ENCODE measurements at regions of chr10 and their contacts with region 1.

Region 1: DNA sequence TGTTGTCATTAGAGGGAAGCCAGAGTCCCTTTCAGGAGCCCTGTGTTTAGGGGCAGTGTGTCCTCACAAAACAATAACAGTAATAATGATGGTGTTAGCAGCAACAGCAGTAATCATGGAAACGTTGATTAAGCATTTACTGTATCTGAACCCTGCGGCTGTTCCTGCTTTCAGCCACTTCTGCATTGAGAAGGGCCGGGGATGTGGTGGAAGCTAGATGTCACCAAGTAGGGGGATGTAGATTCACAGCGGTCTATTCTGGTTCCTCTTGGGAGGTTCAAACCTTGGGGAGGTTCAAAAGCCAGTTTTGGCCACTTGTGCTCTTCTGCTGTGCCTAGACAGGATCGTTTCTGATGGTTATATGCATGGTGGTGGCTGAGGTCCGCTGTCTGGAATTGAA is 44.8 kb downstream of the PRPF18 start:
- DNase-seq: no peak
- H3K4me3 ChIP-seq: no peak overlapping the region
- H3K4me3 Mint-ChIP-seq: no peak overlapping the region
- H3K27ac Mint-ChIP-seq: no peak overlapping the region
- H3K4me1 ChIP-seq: peaks cover 38% of the 10 kb centered on the region
- H3K4me1 Mint-ChIP-seq: peaks cover 15% of the 10 kb centered on the region
- H3K27me3 ChIP-seq: no peaks in the 10 kb centered on the region
- H3K27me3 Mint-ChIP-seq: no peaks in the 10 kb centered on the region
- CTCF ChIP-seq: no peak

Region 2: GRCh38 chr10:13092291-13093102 is 539.1 kb before region 1 on chr10:
- CTCF ChIA-PET with region 1: interaction called, 13 read pairs
- POLR2A ChIA-PET with region 1: no interaction called
- intact Hi-C with region 1: no loop called
- DNase-seq: no peak
- H3K4me3 ChIP-seq: no peak overlapping the region
- H3K4me3 Mint-ChIP-seq: no peak overlapping the region
- H3K27ac Mint-ChIP-seq: no peak overlapping the region
- H3K4me1 ChIP-seq: no peaks in the 10 kb centered on the region
- H3K4me1 Mint-ChIP-seq: no peaks in the 10 kb centered on the region
- H3K27me3 ChIP-seq: no peaks in the 10 kb centered on the region
- H3K27me3 Mint-ChIP-seq: no peaks in the 10 kb centered on the region
- CTCF ChIP-seq: no peak

Region 3: GRCh38 chr10:13649844-13650521 is 18.4 kb after region 1 on chr10:
- CTCF ChIA-PET with region 1: no interaction called
- POLR2A ChIA-PET with region 1: no interaction called
- intact Hi-C with region 1: loop called (anchors 2 kb)
- DNase-seq: peak in 1 of 2 experiments; percentile 26
- H3K4me3 ChIP-seq: no peak overlapping the region
- H3K4me3 Mint-ChIP-seq: no peak overlapping the region
- H3K27ac Mint-ChIP-seq: no peak overlapping the region
- H3K4me1 ChIP-seq: no peaks in the 10 kb centered on the region
- H3K4me1 Mint-ChIP-seq: no peaks in the 10 kb centered on the region
- H3K27me3 ChIP-seq: no peaks in the 10 kb centered on the region
- H3K27me3 Mint-ChIP-seq: no peaks in the 10 kb centered on the region
- CTCF ChIP-seq: no peak

Region 4: GRCh38 chr10:13891128-13892000 is 259.8 kb after region 1 on chr10:
- CTCF ChIA-PET with region 1: no interaction called
- POLR2A ChIA-PET with region 1: no interaction called
- intact Hi-C with region 1: no loop called
- DNase-seq: no peak
- H3K4me3 ChIP-seq: no peak overlapping the region
- H3K4me3 Mint-ChIP-seq: no peak overlapping the region
- H3K27ac Mint-ChIP-seq: no peak overlapping the region
- H3K4me1 ChIP-seq: 0 out of 2 replicates have a peak, but pooled peaks cover 4% of the 10 kb centered on the region
- H3K4me1 Mint-ChIP-seq: no peaks in the 10 kb centered on the region
- H3K27me3 ChIP-seq: no peaks in the 10 kb centered on the region; the same call in 1 of the 2 replicates
- H3K27me3 Mint-ChIP-seq: peaks cover 26% of the 10 kb centered on the region
- CTCF ChIP-seq: no peak